Naive thymus-derived CD8-positive, alpha-beta T cell (primary cell): ENCODE measurements at regions of chr11 and their contacts with region 1.

Region 1: DNA sequence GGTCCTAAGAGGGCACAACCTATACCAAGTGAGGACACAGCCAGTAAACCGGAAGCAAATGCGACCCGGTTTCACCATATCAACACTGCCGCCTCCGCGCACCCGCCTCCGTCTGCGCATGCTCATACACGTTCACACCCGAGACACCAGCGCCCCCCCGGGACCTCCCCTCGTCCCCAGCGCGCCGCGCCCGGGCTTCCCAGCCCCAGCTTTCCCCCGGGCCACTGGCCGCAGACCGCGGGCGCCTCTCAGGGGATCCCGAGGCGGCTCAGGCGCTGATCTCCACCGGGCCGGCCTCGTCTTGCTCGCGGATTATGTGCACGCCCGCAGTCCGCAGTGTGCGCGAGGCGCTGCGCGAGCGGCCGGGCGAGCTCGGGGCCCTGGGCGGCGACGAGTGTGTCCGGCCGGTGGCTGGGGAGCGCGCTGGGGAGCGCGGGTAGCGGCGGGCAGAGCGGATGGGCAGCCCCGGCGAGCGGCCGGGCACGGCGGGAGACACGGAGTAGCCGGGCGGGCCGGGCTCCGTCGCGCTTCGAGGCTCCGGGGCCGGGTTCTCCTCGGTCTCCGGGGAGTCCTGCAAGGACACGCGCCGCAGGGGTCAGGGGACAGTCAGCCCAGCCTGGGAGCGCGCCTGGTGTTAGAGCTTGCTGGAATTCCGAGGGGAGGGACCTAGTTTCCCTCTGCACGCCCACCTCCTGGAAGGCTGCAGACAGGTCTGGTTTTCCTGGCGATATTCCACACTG is 2.0 kb downstream of the HEPN1 start:
- DNase-seq: peak; percentile 73 to 96 (median 83)
- ATAC-seq: peak; percentile 86 to 92
- H3K4me3 Mint-ChIP-seq: peak overlapping the region; percentile 64 to 88 (median 83)
- H3K27ac Mint-ChIP-seq: peak overlapping the region in 9 of 10 donors; percentile 75 to 92 (median 83)
- H3K4me1 Mint-ChIP-seq: peaks cover 21 to 37% (median 32%) of the 10 kb centered on the region in 4 donors
- H3K27me3 Mint-ChIP-seq: peaks cover 0 to 9% (median 0%) of the 10 kb centered on the region in 5 donors

Region 2: GRCh38 chr11:124900464-124900863 is 20.6 kb before region 1 on chr11:
- POLR2A ChIA-PET with region 1: no interaction called
- DNase-seq: no peak
- ATAC-seq: no peak
- H3K4me3 Mint-ChIP-seq: no peak overlapping the region
- H3K27ac Mint-ChIP-seq: no peak overlapping the region
- H3K4me1 Mint-ChIP-seq: peaks cover 0 to 10% (median 8%) of the 10 kb centered on the region in 4 donors
- H3K27me3 Mint-ChIP-seq: peaks cover 10 to 30% (median 11%) of the 10 kb centered on the region in 5 donors

Region 3: DNA sequence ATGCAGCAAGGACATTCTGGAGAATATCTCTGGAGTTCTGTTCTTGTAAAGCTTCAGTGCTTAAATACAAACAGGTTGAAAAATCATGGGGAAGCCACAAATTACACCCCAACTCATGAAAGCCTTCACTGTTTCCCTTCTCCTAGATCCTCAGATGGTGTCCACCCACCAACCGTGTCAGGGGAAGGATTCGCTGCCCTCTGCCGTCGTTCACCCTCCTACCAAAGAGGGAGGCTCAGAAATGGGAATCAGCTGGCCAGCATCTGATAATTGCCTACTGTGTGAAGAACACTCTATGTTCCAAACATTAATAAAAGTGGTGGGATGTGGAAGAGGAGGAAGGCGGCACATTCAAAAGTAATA is 22.2 kb after region 1 on chr11:
- POLR2A ChIA-PET with region 1: interaction called, 10 read pairs
- DNase-seq: no peak
- ATAC-seq: no peak
- H3K4me3 Mint-ChIP-seq: peak overlapping the region in 3 of 10 donors; percentile 28 to 30 (median 29)
- H3K27ac Mint-ChIP-seq: peak overlapping the region; percentile 41 to 93 (median 74)
- H3K4me1 Mint-ChIP-seq: peaks cover 11 to 33% (median 25%) of the 10 kb centered on the region in 4 donors
- H3K27me3 Mint-ChIP-seq: no peaks in the 10 kb centered on the region

Region 4: DNA sequence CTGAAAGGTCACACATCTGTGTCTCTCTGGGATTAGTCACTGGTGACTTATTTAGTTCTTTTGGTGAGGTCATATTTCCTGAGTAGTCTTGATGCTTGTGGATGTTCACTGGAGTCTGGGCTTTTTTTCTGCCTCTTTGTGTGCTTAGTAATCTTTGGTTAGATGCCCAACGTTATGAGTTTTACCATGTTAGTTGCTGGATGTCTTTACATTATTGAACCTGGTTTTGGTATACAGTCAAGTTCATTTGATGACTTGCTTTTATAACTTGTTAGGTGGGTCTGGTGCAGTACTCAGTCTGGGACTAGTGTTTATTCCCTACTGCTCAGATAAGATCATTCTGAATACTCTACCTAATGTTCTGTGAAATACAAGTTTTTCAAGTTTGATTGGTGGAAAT is 115.9 kb after region 1 on chr11:
- POLR2A ChIA-PET with region 1: no interaction called
- DNase-seq: no peak
- ATAC-seq: no peak
- H3K4me3 Mint-ChIP-seq: no peak overlapping the region
- H3K27ac Mint-ChIP-seq: no peak overlapping the region
- H3K4me1 Mint-ChIP-seq: no peaks in the 10 kb centered on the region
- H3K27me3 Mint-ChIP-seq: no peaks in the 10 kb centered on the region